Activated CD4-positive, alpha-beta memory T cell treated with anti-CD3 and anti-CD28 coated beads, Interleukin-2, amount 10 ng/mL, durations not matched to agents 7 days and 5 days (primary cell): ENCODE measurements at regions of chr22 and their contacts with region 1.

Region 1: GRCh38 chr22:17171313-17172171 is 12.5 kb upstream of the HDHD5 start:
- DNase-seq: peak; percentile 80
- H3K4me3 Mint-ChIP-seq: peak overlapping the region; percentile 71
- H3K27ac Mint-ChIP-seq: peak overlapping the region; percentile 36
- H3K4me1 Mint-ChIP-seq: peaks cover 6% of the 10 kb centered on the region
- H3K27me3 Mint-ChIP-seq: peaks cover 9% of the 10 kb centered on the region

Region 2: GRCh38 chr22:17084554-17085276 is 86.8 kb before region 1 on chr22 and contains the start of gene IL17RA:
- CTCF ChIA-PET with region 1: interaction called, 18 read pairs
- POLR2A ChIA-PET with region 1: interaction called, 6 read pairs
- DNase-seq: peak; percentile 96
- H3K4me3 Mint-ChIP-seq: peak within 1 kb of the TSS; percentile 81
- H3K27ac Mint-ChIP-seq: peak within 1 kb of the TSS; percentile 77
- H3K4me1 Mint-ChIP-seq: peaks cover 50% of the 10 kb centered on the region
- H3K27me3 Mint-ChIP-seq: peaks cover 23% of the 10 kb centered on the region
- total RNA-seq, gene IL17RA: 37.8 to 38.7 TPM

Region 3: GRCh38 chr22:17158568-17159503 is 12.7 kb before region 1 on chr22 and contains the start of gene HDHD5:
- CTCF ChIA-PET with region 1: interaction called, 47 read pairs
- POLR2A ChIA-PET with region 1: interaction called, 7 read pairs
- DNase-seq: peak; percentile 89
- H3K4me3 Mint-ChIP-seq: peak within 1 kb of the TSS; percentile 76
- H3K27ac Mint-ChIP-seq: peak within 1 kb of the TSS; percentile 56
- H3K4me1 Mint-ChIP-seq: peaks cover 34% of the 10 kb centered on the region
- H3K27me3 Mint-ChIP-seq: no peaks in the 10 kb centered on the region
- total RNA-seq, gene HDHD5: 27.1 TPM

Region 4: DNA sequence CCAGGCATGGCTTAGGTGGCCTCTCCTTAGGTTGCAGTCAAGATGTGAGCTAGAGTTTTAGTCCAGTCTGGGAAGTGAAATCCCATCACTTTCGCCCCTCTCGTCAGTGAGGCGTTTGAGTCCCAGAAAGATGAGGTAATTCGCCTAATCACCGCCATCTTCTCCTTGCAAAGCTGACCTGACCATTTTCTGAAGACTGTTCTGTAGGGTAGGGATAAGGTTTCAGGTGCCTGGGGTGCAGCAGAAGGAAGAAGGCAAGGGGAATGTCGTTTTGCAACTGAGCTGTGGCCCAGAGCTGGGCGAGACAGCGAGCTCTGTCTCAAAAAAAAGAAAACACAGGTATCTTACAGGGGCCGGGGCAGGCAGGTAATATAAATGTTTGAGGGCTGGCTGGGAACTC is 136.0 kb after region 1 on chr22:
- CTCF ChIA-PET with region 1: interaction called, 12 read pairs
- POLR2A ChIA-PET with region 1: no interaction called
- DNase-seq: no peak
- H3K4me3 Mint-ChIP-seq: no peak overlapping the region
- H3K27ac Mint-ChIP-seq: no peak overlapping the region
- H3K4me1 Mint-ChIP-seq: peaks cover 17% of the 10 kb centered on the region
- H3K27me3 Mint-ChIP-seq: no peaks in the 10 kb centered on the region

Region 5: GRCh38 chr22:17501679-17502285 is 330.2 kb after region 1 on chr22:
- CTCF ChIA-PET with region 1: interaction called, 78 read pairs
- POLR2A ChIA-PET with region 1: interaction called, 5 read pairs
- DNase-seq: peak; percentile 16
- H3K4me3 Mint-ChIP-seq: no peak overlapping the region
- H3K27ac Mint-ChIP-seq: no peak overlapping the region
- H3K4me1 Mint-ChIP-seq: no peaks in the 10 kb centered on the region
- H3K27me3 Mint-ChIP-seq: peaks cover 5% of the 10 kb centered on the region